ENCODE measurements at regions of chr14 and their contacts with region 1.

Region 1: GRCh38 chr14:20613094-20614037 is 22.2 kb upstream of the RNASE12 start:
- DNase-seq: peak; percentile 77
- H3K4me3 Mint-ChIP-seq: no peak overlapping the region
- H3K27ac Mint-ChIP-seq: no peak overlapping the region
- H3K4me1 Mint-ChIP-seq: peaks cover 11% of the 10 kb centered on the region
- H3K27me3 Mint-ChIP-seq: peaks cover 2% of the 10 kb centered on the region

Region 2: GRCh38 chr14:20327005-20327869 is 286.1 kb before region 1 on chr14:
- intact Hi-C with region 1: loop called (anchors 1 kb)
- DNase-seq: peak; percentile 22
- H3K4me3 Mint-ChIP-seq: peak overlapping the region; percentile 9
- H3K27ac Mint-ChIP-seq: peak overlapping the region; percentile 13
- H3K4me1 Mint-ChIP-seq: peaks cover 52% of the 10 kb centered on the region
- H3K27me3 Mint-ChIP-seq: no peaks in the 10 kb centered on the region

Region 3: GRCh38 chr14:20427231-20428009 is 185.9 kb before region 1 on chr14:
- intact Hi-C with region 1: no loop called
- DNase-seq: no peak
- H3K4me3 Mint-ChIP-seq: peak overlapping the region; percentile 13
- H3K27ac Mint-ChIP-seq: peak overlapping the region; percentile 83
- H3K4me1 Mint-ChIP-seq: peaks cover 27% of the 10 kb centered on the region
- H3K27me3 Mint-ChIP-seq: peaks cover 4% of the 10 kb centered on the region

Region 4: GRCh38 chr14:20454516-20455354 is 158.6 kb before region 1 on chr14 and contains the starts of genes APEX1 and OSGEP:
- intact Hi-C with region 1: loop called (anchors 2 kb)
- DNase-seq: peak; percentile 97
- H3K4me3 Mint-ChIP-seq: peak within 1 kb of the TSS; percentile 53
- H3K27ac Mint-ChIP-seq: no peak within 1 kb of the TSS
- H3K4me1 Mint-ChIP-seq: peaks cover 11% of the 10 kb centered on the region
- H3K27me3 Mint-ChIP-seq: no peaks in the 10 kb centered on the region
- total RNA-seq, gene APEX1: 236 and 242 TPM in 2 replicates
- total RNA-seq, gene OSGEP: 69.6 and 77.4 TPM in 2 replicates

Region 5: GRCh38 chr14:20624495-20625070 is 11.2 kb after region 1 on chr14:
- intact Hi-C with region 1: loop called (anchors 1 kb)
- DNase-seq: peak; percentile 28
- H3K4me3 Mint-ChIP-seq: peak overlapping the region; percentile 77
- H3K27ac Mint-ChIP-seq: peak overlapping the region; percentile 87
- H3K4me1 Mint-ChIP-seq: peaks cover 78% of the 10 kb centered on the region
- H3K27me3 Mint-ChIP-seq: peaks cover 51% of the 10 kb centered on the region

Region 6: GRCh38 chr14:20662968-20663732 is 49.8 kb after region 1 on chr14:
- intact Hi-C with region 1: loop called (anchors 1 kb)
- DNase-seq: peak; percentile 69
- H3K4me3 Mint-ChIP-seq: peak overlapping the region; percentile 82
- H3K27ac Mint-ChIP-seq: peak overlapping the region; percentile 28
- H3K4me1 Mint-ChIP-seq: peaks cover 38% of the 10 kb centered on the region
- H3K27me3 Mint-ChIP-seq: peaks cover 11% of the 10 kb centered on the region

Region 7: DNA sequence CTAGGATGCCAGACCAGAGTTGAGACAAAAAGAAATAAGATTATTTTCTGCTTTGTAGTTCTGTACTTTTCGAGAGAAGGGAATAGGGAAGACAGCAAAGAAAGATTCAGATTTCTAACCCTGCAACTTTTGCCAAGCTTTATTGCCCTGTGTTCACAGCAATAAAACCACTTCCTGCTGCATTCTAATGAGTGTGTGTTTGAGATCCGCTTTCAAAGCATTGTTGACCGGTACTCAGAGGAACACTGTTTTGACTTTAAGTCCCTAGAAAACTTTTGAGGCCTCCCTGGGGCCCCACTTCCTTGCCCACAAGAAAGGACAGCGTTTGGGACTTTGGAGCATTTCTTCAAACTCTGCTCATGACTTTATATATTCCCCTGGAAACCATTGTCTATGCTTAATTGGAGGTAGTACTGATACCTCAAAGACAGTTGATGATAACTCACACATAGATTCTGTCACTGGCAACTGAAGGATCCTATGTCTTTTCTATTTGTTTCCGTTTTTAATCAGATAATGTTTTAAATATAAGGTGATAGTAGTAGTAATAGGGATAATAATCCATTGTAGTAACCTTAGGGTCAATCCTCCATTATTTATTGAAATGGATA is 169.0 kb after region 1 on chr14:
- intact Hi-C with region 1: loop called (anchors 5 kb)
- DNase-seq: no peak
- H3K4me3 Mint-ChIP-seq: peak overlapping the region; percentile 76
- H3K27ac Mint-ChIP-seq: peak overlapping the region; percentile 77
- H3K4me1 Mint-ChIP-seq: peaks cover 28% of the 10 kb centered on the region
- H3K27me3 Mint-ChIP-seq: no peaks in the 10 kb centered on the region

Region 8: GRCh38 chr14:20989572-20990551 is 376.5 kb after region 1 on chr14 and contains the start of gene METTL17:
- intact Hi-C with region 1: loop called (anchors 5 kb)
- DNase-seq: peak; percentile 83
- H3K4me3 Mint-ChIP-seq: peak within 1 kb of the TSS; percentile 96
- H3K27ac Mint-ChIP-seq: peak within 1 kb of the TSS; percentile 85
- H3K4me1 Mint-ChIP-seq: peaks cover 25% of the 10 kb centered on the region
- H3K27me3 Mint-ChIP-seq: no peaks in the 10 kb centered on the region
- total RNA-seq, gene METTL17: 96.1 and 100 TPM in 2 replicates